PC-9 (cell line): ENCODE measurements at regions of chr1 and their contacts with region 1.

Region 1: GRCh38 chr1:186212544-186213226 is 162.4 kb downstream of the TPR start:
- DNase-seq: peak; percentile 55 to 82
- H3K4me3 ChIP-seq: no peak overlapping the region
- H3K27ac ChIP-seq: no peak overlapping the region
- H3K4me1 ChIP-seq: no peaks in the 10 kb centered on the region
- H3K27me3 ChIP-seq: no peaks in the 10 kb centered on the region
- CTCF ChIP-seq: peak; percentile 93

Region 2: DNA sequence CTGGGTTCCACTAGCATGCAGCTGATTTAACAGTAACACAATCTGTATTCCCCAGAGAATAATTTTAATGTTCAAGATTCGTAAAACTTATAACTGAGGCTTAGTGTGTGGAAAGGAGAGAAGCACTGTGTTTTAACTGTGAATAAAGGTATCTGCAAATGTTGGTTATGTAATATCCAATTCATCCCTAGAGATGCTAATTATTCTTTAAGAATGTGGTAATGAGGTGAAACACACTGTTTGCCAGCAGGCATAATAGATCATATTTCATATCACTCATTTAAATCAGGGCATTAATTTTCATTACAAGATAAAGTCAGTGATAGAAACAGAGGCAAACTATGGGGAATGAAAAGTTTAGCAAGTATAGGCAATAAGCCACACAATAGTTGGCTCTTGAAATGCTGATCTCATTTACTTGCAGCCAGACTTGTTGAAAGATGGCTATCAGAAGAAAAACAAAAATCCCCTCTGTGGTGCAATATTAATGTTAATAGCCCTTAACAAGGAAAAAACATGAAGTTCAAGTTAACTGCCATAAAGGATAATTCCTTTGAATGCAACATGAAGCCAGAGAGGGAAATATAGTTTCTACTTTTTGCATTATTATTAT is 445.1 kb before region 1 on chr1:
- CTCF ChIA-PET with region 1: no interaction called
- POLR2A ChIA-PET with region 1: no interaction called
- intact Hi-C with region 1: no loop called
- DNase-seq: no peak
- H3K4me3 ChIP-seq: no peak overlapping the region
- H3K27ac ChIP-seq: no peak overlapping the region
- H3K4me1 ChIP-seq: no peaks in the 10 kb centered on the region
- H3K27me3 ChIP-seq: no peaks in the 10 kb centered on the region
- CTCF ChIP-seq: no peak

Region 3: GRCh38 chr1:185813401-185813979 is 399.2 kb before region 1 on chr1:
- CTCF ChIA-PET with region 1: no interaction called
- POLR2A ChIA-PET with region 1: no interaction called
- intact Hi-C with region 1: loop called (anchors 1 kb)
- DNase-seq: peak in 1 of 2 experiments; percentile 50
- H3K4me3 ChIP-seq: no peak overlapping the region
- H3K27ac ChIP-seq: no peak overlapping the region
- H3K4me1 ChIP-seq: no peaks in the 10 kb centered on the region
- H3K27me3 ChIP-seq: no peaks in the 10 kb centered on the region
- CTCF ChIP-seq: peak; percentile 85

Region 4: DNA sequence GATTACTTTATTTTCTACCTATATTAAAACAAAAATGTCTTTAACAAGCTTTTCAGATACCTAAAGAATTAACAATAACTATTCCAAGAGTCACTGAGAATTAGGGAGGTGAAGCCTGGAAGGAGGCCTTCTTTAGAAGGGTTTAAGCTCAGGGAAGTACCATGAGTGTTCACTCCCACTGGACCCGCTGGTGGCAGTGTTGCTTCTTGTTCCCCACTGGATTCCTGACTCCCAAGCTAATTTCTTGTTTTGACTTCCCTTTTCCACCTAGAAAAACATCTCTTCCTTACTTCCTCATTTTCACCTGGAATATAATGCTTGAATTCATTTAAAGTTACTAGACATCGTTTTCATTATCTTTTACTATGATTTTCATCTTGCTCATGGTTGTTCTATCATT is 214.3 kb before region 1 on chr1:
- CTCF ChIA-PET with region 1: no interaction called
- POLR2A ChIA-PET with region 1: no interaction called
- intact Hi-C with region 1: loop called (anchors 2 kb)
- DNase-seq: no peak
- H3K4me3 ChIP-seq: no peak overlapping the region
- H3K27ac ChIP-seq: no peak overlapping the region
- H3K4me1 ChIP-seq: peaks cover 6% of the 10 kb centered on the region; the same call in 1 of the 2 replicates
- H3K27me3 ChIP-seq: no peaks in the 10 kb centered on the region
- CTCF ChIP-seq: no peak

Region 5: DNA sequence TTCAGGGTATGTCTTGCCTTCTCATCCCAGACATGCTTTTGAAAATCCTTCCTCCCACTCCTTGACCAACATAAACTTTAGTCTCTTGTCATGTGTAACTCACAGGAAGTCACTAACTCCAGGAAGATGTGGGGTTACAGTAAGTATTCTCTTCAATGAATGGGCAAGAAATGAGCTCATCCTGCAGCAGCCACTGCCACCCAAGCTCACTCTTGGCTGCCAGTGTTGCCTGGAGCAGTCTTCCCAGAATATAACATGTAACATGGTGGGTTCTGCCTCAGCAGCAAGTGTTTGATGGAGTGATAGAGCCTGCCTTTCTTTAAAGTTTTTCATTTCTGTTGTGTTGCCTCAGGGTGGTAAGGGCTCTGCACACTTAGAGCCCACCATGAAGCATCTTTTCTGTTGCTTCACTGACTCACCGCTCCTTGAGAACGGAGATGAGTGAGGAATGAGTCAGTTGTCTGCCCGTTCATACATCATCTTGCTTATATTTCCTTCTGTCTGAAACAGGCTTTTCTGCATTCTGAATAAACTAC is 24.6 kb before region 1 on chr1:
- CTCF ChIA-PET with region 1: interaction called, 4 read pairs
- POLR2A ChIA-PET with region 1: no interaction called
- intact Hi-C with region 1: loop called (anchors 2 kb)
- DNase-seq: peak; percentile 54 to 88
- H3K4me3 ChIP-seq: no peak overlapping the region; the same call in 1 of the 2 replicates
- H3K27ac ChIP-seq: peak overlapping the region; percentile 86
- H3K4me1 ChIP-seq: peaks cover 53% of the 10 kb centered on the region
- H3K27me3 ChIP-seq: no peaks in the 10 kb centered on the region
- CTCF ChIP-seq: no peak

Region 6: GRCh38 chr1:186255266-186255665 is 42.6 kb after region 1 on chr1:
- CTCF ChIA-PET with region 1: no interaction called
- POLR2A ChIA-PET with region 1: no interaction called
- intact Hi-C with region 1: no loop called
- DNase-seq: no peak
- H3K4me3 ChIP-seq: no peak overlapping the region
- H3K27ac ChIP-seq: no peak overlapping the region
- H3K4me1 ChIP-seq: no peaks in the 10 kb centered on the region
- H3K27me3 ChIP-seq: no peaks in the 10 kb centered on the region
- CTCF ChIP-seq: no peak

Region 7: DNA sequence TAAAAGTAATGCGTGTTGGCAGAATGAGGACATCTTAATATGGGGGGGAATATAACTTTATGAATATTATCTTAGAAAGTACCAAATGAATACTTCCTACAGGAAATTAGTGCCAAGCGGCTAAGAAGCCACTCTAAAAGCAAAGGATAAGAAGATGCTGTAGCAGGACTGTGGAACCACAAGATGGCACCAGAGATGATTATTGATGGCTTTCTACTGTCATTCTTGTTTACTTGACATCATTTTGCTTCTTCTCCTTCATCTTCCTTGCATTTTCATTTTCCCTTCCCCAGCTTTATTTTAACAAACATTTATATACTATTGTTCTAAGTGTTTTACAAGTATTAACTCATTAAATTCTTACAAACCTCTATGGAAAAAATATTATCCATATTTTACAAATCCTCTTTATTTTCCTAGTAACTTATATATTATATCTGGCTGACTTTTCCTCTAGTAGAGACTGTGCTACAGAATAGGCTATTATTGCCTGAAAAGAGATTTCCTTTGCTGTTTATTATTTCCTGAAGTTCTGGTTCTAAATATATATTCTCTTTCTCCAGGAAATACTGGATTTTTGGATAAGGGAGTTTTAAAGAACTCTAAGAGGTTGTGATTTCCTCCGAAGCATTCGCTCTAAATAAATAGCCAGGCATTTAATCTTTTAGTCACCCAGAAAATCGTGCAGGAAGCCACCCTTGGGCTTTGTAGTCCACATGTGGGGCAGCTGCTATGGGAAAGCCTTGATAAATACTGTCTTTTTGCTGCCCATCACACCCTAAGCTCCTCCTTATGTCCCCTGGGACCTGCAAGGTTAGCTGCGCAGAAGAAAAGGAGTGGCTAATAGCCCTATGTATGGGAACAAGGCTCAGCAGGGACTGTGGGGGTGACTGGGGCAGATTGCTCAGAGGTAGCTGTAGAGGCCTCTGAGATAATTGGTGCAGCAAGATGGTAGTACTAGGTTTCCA is 92.6 kb after region 1 on chr1:
- CTCF ChIA-PET with region 1: no interaction called
- POLR2A ChIA-PET with region 1: no interaction called
- intact Hi-C with region 1: no loop called
- DNase-seq: no peak
- H3K4me3 ChIP-seq: no peak overlapping the region
- H3K27ac ChIP-seq: no peak overlapping the region
- H3K4me1 ChIP-seq: no peaks in the 10 kb centered on the region
- H3K27me3 ChIP-seq: no peaks in the 10 kb centered on the region
- CTCF ChIP-seq: peak; percentile 65; the same call in 1 of the 2 replicates

Region 8: GRCh38 chr1:186330758-186331157 is 118.1 kb after region 1 on chr1:
- CTCF ChIA-PET with region 1: no interaction called
- POLR2A ChIA-PET with region 1: no interaction called
- intact Hi-C with region 1: no loop called
- DNase-seq: no peak
- H3K4me3 ChIP-seq: no peak overlapping the region
- H3K27ac ChIP-seq: no peak overlapping the region
- H3K4me1 ChIP-seq: no peaks in the 10 kb centered on the region
- H3K27me3 ChIP-seq: no peaks in the 10 kb centered on the region
- CTCF ChIP-seq: peak; percentile 55; the same call in 1 of the 2 replicates